ENCODE measurements at regions of chr5 and their contacts with region 1.

Region 1: GRCh38 chr5:159444441-159445082 is 114.3 kb upstream of the IL12B start:
- DNase-seq: no peak

Region 2: DNA sequence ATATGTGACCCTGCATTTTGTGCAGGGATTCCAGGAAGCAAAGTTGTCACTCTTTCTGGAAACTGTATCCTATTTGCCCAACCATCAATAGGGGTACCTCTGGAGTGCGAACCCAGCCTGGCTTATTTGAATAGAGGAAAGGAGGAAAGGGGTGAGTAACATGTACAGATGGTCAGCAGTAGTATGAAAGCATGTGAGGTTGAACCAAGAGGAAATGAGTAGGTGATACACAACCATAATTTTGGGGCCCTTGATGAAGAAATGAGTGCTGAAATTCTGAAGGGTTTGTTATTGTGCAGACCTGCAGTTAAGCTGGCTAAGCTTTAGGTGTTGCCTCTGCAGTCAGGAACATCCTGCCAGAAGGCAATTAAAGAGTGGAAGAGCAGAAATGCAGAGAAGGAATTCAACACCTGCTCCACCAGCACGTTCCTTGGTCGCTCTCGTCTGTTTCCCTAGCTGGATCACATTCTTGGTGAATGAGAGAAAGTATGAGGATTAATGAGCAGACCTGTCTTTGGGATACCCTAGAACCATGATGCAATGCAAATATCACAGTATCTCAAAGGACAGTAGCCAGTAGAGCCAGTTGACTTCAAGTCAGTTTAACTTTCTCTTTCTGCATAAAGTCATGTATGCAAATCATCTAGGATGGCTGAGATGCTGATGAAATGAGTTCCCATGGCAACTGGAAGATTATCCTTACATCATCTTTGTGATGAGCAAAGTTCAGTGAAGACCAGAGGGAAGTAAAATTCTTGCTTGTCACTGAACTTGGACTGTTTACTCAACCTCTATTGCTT is 101.1 kb before region 1 on chr5:
- intact Hi-C with region 1: no loop called
- DNase-seq: no peak

Region 3: GRCh38 chr5:159682623-159683022 is 238.1 kb after region 1 on chr5:
- intact Hi-C with region 1: loop called (anchors 10 kb)
- DNase-seq: no peak

Region 4: GRCh38 chr5:159915904-159916840 is 471.6 kb after region 1 on chr5 and contains the start of gene ADRA1B:
- intact Hi-C with region 1: loop called (anchors 2 kb)
- DNase-seq: peak; percentile 84
- total RNA-seq, gene ADRA1B: 4.9 TPM

Region 5: GRCh38 chr5:159975462-159976019 is 531.0 kb after region 1 on chr5:
- intact Hi-C with region 1: loop called (anchors 5 kb)
- DNase-seq: no peak

Region 6: GRCh38 chr5:159987031-159987674 is 542.6 kb after region 1 on chr5:
- intact Hi-C with region 1: loop called (anchors 5 kb)
- DNase-seq: peak; percentile 83

Measured in cardiac septum (tissue), 1 donor.